ENCODE measurements at regions of chr10 and their contacts with region 1.

Region 1: GRCh38 chr10:61284222-61284890 is 168.8 kb downstream of the TMEM26 start:
- DNase-seq: peak in 1 of 2 donors; percentile 13
- ATAC-seq: peak in 4 of 8 donors; percentile 42 to 62 (median 53)
- H3K4me3 ChIP-seq: peak overlapping the region in 1 of 10 donors; percentile 18
- H3K27ac ChIP-seq: peak overlapping the region in 1 of 10 donors; percentile 16
- H3K4me1 ChIP-seq: peaks cover 0 to 20% (median 0%) of the 10 kb centered on the region in 9 donors
- H3K27me3 ChIP-seq: no peaks in the 10 kb centered on the region
- CTCF ChIP-seq: peak; percentile 66 to 89 (median 80)

Region 2: DNA sequence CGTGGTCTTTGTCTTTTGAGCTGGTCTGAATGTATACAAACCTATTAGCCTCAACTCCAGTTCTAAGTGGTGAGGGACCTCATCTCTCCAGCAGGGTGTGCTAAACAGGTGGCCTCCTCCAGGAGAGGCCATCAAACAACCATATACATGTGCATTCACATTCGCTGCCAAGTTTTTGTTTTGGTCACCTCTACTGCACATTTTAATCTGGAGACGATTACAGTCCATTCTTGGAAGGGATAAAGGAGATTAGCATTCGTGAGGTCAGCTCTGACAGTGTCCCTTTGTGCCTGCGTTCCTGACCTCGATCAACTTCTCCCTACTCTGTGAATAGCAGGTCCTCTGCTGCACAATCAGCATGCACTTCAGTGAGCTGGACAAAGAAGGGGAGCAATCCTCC is 401.2 kb before region 1 on chr10:
- intact Hi-C with region 1: loop called in 1 of 10 experiments (anchors 10 kb)
- DNase-seq: peak in 1 of 2 donors; percentile 38
- ATAC-seq: peak; percentile 67 to 95 (median 90)
- H3K4me3 ChIP-seq: no peak overlapping the region
- H3K27ac ChIP-seq: peak overlapping the region in 7 of 10 donors; percentile 2 to 64 (median 52)
- H3K4me1 ChIP-seq: peaks cover 0 to 29% (median 11%) of the 10 kb centered on the region in 9 donors
- H3K27me3 ChIP-seq: no peaks in the 10 kb centered on the region
- CTCF ChIP-seq: peak; percentile 29 to 70 (median 55)

Region 3: GRCh38 chr10:60964257-60965235 is 319.8 kb before region 1 on chr10:
- intact Hi-C with region 1: loop called in 6 of 10 experiments (anchors 5 to 10 kb)
- DNase-seq: peak; percentile 40 to 80
- ATAC-seq: peak in 7 of 8 donors; percentile 66 to 93 (median 90)
- H3K4me3 ChIP-seq: peak overlapping the region in 1 of 10 donors; percentile 2
- H3K27ac ChIP-seq: peak overlapping the region in 7 of 10 donors; percentile 39 to 62 (median 54)
- H3K4me1 ChIP-seq: peaks cover 0 to 25% (median 10%) of the 10 kb centered on the region in 9 donors
- H3K27me3 ChIP-seq: no peaks in the 10 kb centered on the region
- CTCF ChIP-seq: peak; percentile 70 to 92 (median 86)

Region 4: DNA sequence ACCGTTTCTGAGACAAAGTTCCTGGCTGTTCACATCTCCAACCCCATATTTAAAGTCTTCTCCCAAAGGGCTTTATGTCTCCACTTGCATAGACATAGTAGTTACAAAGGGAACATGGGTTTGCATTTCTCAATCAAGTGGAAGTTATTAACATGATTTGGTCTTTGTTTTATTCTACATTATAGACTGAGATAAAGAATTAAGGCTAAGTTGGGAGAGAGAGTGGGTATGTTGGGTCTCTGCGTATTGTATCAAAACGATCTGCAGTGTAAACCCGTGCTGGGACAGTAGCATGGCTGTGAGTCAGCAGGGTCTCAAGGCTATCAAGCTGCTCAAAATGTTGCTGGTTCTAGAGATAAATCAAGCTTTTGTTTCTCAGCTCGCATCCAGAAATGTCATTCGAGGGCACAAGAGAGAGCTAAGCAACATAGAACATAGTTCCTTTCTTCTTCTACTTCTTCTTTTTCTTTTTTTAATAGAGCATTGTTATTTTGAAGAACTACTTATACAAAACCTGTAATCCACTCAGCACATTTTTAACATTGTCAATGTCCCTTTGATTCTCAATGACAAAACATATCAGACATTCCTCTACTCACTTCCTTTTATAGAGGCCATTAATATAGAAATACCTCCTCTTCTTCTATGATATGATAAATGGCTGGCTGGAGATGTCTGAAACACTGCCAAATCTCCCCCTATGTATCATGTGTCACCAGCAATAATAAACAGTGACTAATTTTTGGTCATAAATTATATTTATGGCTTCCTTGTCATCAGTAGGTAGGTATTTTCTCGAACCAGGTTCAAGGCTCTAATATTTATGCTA is 305.9 kb before region 1 on chr10:
- intact Hi-C with region 1: loop called in 1 of 10 experiments (anchors 10 kb)
- DNase-seq: no peak
- ATAC-seq: no peak
- H3K4me3 ChIP-seq: no peak overlapping the region
- H3K27ac ChIP-seq: no peak overlapping the region
- H3K4me1 ChIP-seq: peaks cover 0 to 8% (median 0%) of the 10 kb centered on the region in 9 donors
- H3K27me3 ChIP-seq: no peaks in the 10 kb centered on the region
- CTCF ChIP-seq: no peak

Region 5: GRCh38 chr10:61135276-61135721 is 149.1 kb before region 1 on chr10:
- intact Hi-C with region 1: loop called (anchors 2 to 10 kb)
- DNase-seq: no peak
- ATAC-seq: no peak
- H3K4me3 ChIP-seq: no peak overlapping the region
- H3K27ac ChIP-seq: no peak overlapping the region
- H3K4me1 ChIP-seq: peaks cover 0 to 15% (median 0%) of the 10 kb centered on the region in 9 donors
- H3K27me3 ChIP-seq: no peaks in the 10 kb centered on the region
- CTCF ChIP-seq: no peak

Region 6: GRCh38 chr10:61140765-61141392 is 143.5 kb before region 1 on chr10:
- intact Hi-C with region 1: loop called (anchors 2 to 10 kb)
- DNase-seq: peak in 1 of 2 donors; percentile 40
- ATAC-seq: peak in 4 of 8 donors; percentile 54 to 71 (median 66)
- H3K4me3 ChIP-seq: no peak overlapping the region
- H3K27ac ChIP-seq: no peak overlapping the region
- H3K4me1 ChIP-seq: peaks cover 0 to 19% (median 0%) of the 10 kb centered on the region in 9 donors
- H3K27me3 ChIP-seq: no peaks in the 10 kb centered on the region
- CTCF ChIP-seq: peak; percentile 57 to 87 (median 74)

Region 7: DNA sequence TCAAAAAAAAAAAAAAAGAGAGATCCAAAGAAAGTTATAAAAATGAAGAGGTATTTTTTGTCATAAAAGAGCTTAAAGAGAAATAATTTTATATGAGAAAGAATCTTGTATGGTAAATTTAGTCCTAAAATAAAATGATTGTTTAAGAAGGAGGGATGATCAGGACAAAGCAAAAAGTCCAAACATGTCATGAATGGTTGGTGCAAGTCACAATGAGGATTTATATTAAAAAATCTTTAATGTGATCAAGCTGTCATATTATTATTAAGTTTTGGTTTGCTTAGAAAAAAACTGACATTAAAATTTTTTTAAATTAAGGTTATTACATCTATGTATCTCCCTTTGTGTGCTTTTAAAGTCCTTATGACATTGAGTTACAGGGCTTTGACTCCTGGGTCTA is 51.6 kb before region 1 on chr10:
- intact Hi-C with region 1: no loop called
- DNase-seq: no peak
- ATAC-seq: no peak
- H3K4me3 ChIP-seq: no peak overlapping the region
- H3K27ac ChIP-seq: no peak overlapping the region
- H3K4me1 ChIP-seq: no peaks in the 10 kb centered on the region
- H3K27me3 ChIP-seq: no peaks in the 10 kb centered on the region
- CTCF ChIP-seq: no peak

Region 8: GRCh38 chr10:61376862-61377368 is 92.6 kb after region 1 on chr10:
- intact Hi-C with region 1: no loop called
- DNase-seq: no peak
- ATAC-seq: peak in 1 of 8 donors; percentile 13
- H3K4me3 ChIP-seq: no peak overlapping the region
- H3K27ac ChIP-seq: no peak overlapping the region
- H3K4me1 ChIP-seq: no peaks in the 10 kb centered on the region
- H3K27me3 ChIP-seq: no peaks in the 10 kb centered on the region
- CTCF ChIP-seq: no peak

Region 9: GRCh38 chr10:61475449-61475873 is 191.1 kb after region 1 on chr10:
- intact Hi-C with region 1: no loop called
- DNase-seq: no peak
- ATAC-seq: no peak
- H3K4me3 ChIP-seq: no peak overlapping the region
- H3K27ac ChIP-seq: no peak overlapping the region
- H3K4me1 ChIP-seq: peaks cover 0 to 9% (median 0%) of the 10 kb centered on the region in 9 donors
- H3K27me3 ChIP-seq: no peaks in the 10 kb centered on the region
- CTCF ChIP-seq: no peak